ENCODE measurements at regions of chr6 and their contacts with region 1.

Region 1: DNA sequence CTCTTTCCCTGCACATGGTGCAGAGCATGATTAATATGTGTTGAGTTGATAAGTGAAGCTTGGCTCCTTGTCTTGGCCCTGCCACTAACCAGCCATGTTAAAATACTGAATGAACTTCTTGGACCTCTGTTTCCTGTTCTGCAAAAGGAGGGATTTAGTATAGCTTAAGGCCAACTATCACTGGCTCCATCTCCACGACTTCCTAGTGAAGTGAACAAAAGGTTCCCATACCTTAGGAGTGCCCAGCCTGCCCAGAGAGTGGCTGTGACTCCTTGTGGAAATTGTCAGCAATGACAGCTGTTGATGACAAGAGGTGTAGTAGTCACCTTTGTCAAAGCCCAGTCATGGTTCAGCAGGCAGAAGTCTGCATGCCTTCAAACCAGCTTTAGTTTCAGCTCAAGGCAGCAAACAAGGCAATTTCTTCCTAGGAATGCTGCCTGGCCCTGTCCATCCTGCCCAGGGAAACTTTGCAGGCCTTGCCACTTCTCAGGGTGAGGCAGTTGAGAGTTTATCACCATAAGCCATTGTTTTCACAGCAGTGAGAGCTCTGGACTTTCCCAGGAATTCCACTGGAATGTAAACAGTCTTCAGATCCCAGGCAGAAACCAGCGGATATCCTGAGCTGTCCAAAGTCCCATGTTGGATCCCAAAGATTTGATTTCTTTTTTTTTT is 169.7 kb upstream of the TNFAIP3 start:
- DNase-seq: no peak
- H3K4me3 ChIP-seq: no peak overlapping the region
- H3K27ac ChIP-seq: no peak overlapping the region
- H3K4me1 ChIP-seq: no peaks in the 10 kb centered on the region
- H3K27me3 ChIP-seq: no peaks in the 10 kb centered on the region
- CTCF ChIP-seq: no peak
- POLR2A ChIP-seq: no peak

Region 2: GRCh38 chr6:137536104-137536773 is 161.2 kb before region 1 on chr6:
- intact Hi-C with region 1: no loop called
- DNase-seq: no peak
- H3K4me3 ChIP-seq: no peak overlapping the region
- H3K27ac ChIP-seq: no peak overlapping the region
- H3K4me1 ChIP-seq: no peaks in the 10 kb centered on the region
- H3K27me3 ChIP-seq: no peaks in the 10 kb centered on the region
- CTCF ChIP-seq: no peak
- POLR2A ChIP-seq: no peak

Region 3: DNA sequence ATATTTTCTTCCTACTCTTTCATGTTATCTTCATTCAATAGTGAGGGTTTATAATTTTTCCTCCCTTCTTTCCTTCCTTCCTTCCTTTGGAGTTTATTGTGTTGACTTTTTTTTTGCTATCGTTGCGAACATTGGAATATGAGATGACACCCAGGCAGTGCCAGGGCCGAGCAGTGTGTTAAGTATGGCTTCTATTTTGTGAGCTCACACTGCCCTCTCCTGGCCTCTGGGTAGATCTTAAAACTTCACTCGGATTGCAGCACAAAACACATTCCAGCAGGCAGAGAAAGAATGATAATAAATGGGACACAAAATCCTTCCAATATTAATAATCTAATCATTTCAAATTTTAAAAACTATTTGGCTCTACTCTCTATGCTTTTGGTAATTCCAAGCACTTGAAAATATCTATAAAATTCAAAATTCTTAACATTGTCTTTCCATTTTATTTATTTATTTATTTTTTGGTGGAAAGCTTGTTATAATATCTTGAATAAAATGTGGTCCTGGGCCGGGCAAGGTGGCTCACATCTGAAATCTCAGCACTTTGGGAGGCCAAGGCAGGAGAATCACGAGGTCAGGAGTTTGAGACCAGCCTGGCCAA is 55.8 kb before region 1 on chr6:
- intact Hi-C with region 1: no loop called
- DNase-seq: peak in 1 of 2 donors; percentile 64
- H3K4me3 ChIP-seq: no peak overlapping the region
- H3K27ac ChIP-seq: no peak overlapping the region
- H3K4me1 ChIP-seq: no peaks in the 10 kb centered on the region
- H3K27me3 ChIP-seq: no peaks in the 10 kb centered on the region
- CTCF ChIP-seq: peak; percentile 26 to 84 (median 77)
- POLR2A ChIP-seq: no peak

Region 4: GRCh38 chr6:138434925-138435324 is 737.5 kb after region 1 on chr6:
- intact Hi-C with region 1: loop called (anchors 5 kb)
- DNase-seq: no peak
- H3K4me3 ChIP-seq: no peak overlapping the region
- H3K27ac ChIP-seq: no peak overlapping the region
- H3K4me1 ChIP-seq: no peaks in the 10 kb centered on the region
- H3K27me3 ChIP-seq: no peaks in the 10 kb centered on the region
- CTCF ChIP-seq: no peak
- POLR2A ChIP-seq: no peak